RWPE1 (cell line): ENCODE measurements at regions of chr1 and their contacts with region 1.

Region 1: GRCh38 chr1:152047730-152048402 is 11.1 kb upstream of the S100A11 start:
- DNase-seq: peak; percentile 85
- H3K27ac ChIP-seq: peak overlapping the region; percentile 100
- CTCF ChIP-seq: peak; percentile 76

Region 2: GRCh38 chr1:151968058-151968457 is 79.8 kb before region 1 on chr1:
- CTCF ChIA-PET with region 1: no interaction called
- POLR2A ChIA-PET with region 1: no interaction called
- DNase-seq: no peak
- H3K27ac ChIP-seq: no peak overlapping the region
- CTCF ChIP-seq: peak; percentile 41; the same call in 1 of the 2 replicates

Region 3: GRCh38 chr1:151993654-151994496 is 54.0 kb before region 1 on chr1 and contains the start of gene S100A10:
- CTCF ChIA-PET with region 1: no interaction called
- POLR2A ChIA-PET with region 1: no interaction called
- DNase-seq: peak; percentile 67
- H3K27ac ChIP-seq: peak within 1 kb of the TSS; percentile 100
- CTCF ChIP-seq: no peak

Region 4: DNA sequence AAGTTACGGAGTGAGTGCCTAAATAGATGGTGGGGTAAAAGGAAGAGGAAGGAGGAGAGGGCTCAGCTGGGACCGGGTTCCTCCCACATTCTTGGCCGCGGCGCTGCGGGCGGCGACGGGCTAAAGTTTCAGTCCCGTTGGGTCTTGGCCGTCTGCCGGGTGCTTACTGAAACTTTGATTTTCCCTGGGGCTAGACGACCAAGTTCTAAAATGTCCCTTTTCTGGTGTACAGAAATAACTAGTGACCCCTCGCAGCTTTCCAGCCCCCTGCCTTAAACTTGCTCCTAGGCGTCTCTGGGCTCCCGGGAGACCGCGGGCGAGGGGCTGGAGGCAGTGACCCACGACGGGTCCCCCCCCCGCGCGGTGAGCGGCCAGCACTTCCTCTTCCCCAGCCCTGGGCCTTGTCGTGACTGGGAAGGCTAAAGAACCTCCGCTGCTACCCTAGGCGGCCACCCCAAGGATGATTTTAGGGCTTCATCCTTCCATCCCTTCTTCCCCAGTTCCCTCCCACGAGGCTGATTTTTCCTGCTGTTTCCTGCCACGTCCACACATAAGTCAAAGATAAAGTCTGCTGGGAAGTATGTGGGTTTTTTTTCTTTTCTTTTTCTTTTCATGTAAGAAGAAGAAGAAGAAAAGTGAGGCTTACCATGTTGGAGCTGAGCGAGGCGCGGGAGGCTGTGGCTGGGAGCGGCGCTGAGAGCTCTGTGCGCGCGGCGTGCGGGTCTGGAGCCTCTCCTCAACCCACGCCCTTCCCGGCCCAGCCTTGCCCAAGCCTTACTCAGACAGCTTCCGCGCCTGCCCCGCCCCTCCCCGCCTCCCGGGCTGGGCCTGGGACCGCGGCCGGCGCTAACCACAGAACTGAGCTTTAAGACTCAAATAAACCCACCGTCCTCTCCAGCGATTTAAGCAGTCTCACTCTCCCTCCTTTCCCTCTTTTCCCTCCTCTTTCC is 11.3 kb before region 1 on chr1 and contains the start of gene S100A11:
- CTCF ChIA-PET with region 1: interaction called, 6 read pairs
- POLR2A ChIA-PET with region 1: interaction called, 42 read pairs
- DNase-seq: peak; percentile 84
- H3K27ac ChIP-seq: peak within 1 kb of the TSS; percentile 97
- CTCF ChIP-seq: no peak

Region 5: DNA sequence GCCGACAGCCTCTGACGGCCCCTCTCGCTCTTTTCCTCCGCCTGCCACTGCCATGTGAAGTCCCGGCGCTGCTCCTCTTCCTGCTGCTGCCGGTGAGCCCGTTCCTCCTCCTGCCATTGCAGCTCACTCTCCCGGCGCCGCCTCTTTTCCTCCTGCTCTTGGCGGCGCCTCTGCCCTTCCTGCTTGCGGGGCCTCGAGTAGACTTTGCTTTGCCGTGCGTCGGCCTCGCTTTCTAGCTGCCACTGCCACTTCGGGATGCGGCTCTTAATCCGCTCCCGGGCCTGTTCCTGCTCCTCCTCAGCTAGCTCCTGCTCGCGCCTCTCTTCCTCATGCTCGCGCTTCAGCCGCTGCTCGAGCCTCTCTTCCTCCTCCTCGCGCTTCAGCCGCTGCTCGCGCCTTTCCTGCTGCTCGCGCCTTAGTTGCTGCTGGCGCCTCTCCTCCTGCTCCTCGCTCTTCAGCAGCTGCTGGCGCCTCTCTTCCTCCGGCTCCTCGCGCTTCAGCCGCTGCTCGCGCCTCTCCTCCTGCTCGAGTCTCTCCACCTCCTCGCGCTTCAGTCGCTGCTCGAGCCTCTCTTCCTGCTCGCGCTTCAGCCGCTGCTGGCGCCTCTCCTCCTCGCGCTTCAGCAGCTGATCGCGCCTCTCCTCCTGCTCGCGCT is 63.1 kb after region 1 on chr1:
- CTCF ChIA-PET with region 1: interaction called, 10 read pairs
- POLR2A ChIA-PET with region 1: no interaction called
- DNase-seq: peak; percentile 25
- H3K27ac ChIP-seq: peak overlapping the region; percentile 76
- CTCF ChIP-seq: no peak

Region 6: GRCh38 chr1:152167835-152168519 is 120.1 kb after region 1 on chr1:
- CTCF ChIA-PET with region 1: no interaction called
- POLR2A ChIA-PET with region 1: interaction called, 15 read pairs
- DNase-seq: peak; percentile 91
- H3K27ac ChIP-seq: peak overlapping the region; percentile 89
- CTCF ChIP-seq: no peak

Region 7: GRCh38 chr1:152189657-152190442 is 142.0 kb after region 1 on chr1:
- CTCF ChIA-PET with region 1: interaction called, 14 read pairs
- POLR2A ChIA-PET with region 1: no interaction called
- DNase-seq: peak; percentile 48
- H3K27ac ChIP-seq: peak overlapping the region; percentile 63
- CTCF ChIP-seq: peak; percentile 71